HEK293T (cell line): ENCODE measurements at regions of chr7 and their contacts with region 1.

Region 1: DNA sequence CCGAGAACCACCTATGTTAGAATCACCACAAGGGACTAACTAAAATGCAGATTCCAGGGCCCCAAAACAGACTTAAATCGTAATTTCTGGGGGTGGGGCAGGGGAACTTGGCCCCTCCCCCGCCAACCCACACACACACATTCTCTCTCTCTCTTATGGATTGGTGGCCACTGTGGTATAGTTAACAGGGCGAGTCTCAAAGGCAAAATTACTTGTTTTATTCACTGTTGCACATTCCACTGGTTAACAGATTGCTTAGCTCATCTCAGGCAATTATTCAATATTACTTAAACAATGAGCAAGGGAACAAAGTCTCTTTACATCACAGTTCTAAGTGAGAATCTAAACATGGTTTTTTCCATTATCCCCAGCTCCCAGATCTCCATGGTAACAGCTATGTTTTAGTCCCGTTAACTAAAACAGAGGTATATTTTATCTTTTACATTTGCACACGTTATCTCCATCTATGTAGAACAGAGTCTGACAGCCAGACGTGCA is 38.5 kb downstream of the IGF2BP3 start:
- DNase-seq: no peak

Region 2: DNA sequence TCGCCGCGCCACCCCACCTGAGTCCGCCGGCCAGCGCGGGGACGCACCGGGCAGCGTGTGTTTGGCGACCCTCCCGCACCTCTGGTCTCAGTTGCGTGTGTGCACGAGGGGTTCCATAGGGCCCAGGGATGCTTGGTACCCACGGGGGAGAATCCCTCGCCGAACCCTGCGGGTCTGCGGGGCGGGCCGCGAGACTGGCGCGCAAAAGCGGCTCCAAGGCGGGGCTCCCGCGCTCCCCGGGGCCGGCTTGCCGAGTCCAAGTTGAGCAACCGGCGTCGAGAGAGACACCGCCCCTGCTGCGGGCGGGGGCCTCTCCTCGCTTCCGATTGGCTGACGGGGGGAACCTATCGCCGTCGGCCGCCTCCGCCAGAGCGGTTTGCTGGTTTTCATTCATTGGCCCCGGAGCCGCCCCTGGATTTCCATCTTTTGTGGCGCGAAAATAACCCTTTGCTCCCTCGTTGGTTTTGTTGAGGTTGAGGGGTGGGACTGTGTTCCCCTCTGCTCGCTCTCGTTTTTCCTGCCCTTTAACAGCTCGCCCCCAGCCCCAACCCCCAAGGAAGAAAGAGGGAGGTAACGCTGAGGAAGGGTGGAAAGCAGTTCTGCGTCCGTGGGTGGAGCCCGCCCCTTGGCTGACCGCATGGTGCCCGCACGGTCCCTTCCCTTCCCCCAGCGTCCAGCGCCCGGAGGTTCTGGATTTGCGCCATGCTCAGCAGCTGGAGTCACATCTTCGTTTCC is 42.5 kb after region 1 on chr7:
- CTCF ChIA-PET with region 1: interaction called, 5 read pairs
- POLR2A ChIA-PET with region 1: interaction called, 31 read pairs
- DNase-seq: peak; percentile 84